ENCODE measurements at regions of chr2 and their contacts with region 1.

Region 1: DNA sequence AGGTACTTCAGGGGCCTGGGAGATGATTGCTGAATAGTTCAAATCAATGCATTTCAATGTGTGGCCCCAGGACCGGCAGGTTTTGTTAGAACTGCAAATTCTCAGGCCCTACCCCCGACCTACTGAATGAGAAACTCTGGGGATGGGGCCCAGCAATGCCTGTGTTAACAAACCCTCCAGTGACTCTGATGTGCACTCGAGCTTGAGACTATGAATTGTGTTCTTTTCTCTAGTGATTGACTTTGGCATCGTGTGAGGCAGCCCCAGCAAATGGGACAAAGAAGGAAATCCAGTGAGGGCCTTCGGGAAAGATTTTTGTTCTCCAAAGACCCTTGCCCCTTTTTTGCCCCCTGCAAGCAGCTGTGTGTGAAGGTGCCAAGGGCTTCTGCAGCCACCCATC is 22.4 kb downstream of the ALK start:
- DNase-seq: no peak
- H3K4me3 ChIP-seq: no peak overlapping the region
- H3K27ac ChIP-seq: no peak overlapping the region
- H3K4me1 ChIP-seq: no peaks in the 10 kb centered on the region
- H3K27me3 ChIP-seq: peaks cover 50% of the 10 kb centered on the region
- CTCF ChIP-seq: no peak

Region 2: DNA sequence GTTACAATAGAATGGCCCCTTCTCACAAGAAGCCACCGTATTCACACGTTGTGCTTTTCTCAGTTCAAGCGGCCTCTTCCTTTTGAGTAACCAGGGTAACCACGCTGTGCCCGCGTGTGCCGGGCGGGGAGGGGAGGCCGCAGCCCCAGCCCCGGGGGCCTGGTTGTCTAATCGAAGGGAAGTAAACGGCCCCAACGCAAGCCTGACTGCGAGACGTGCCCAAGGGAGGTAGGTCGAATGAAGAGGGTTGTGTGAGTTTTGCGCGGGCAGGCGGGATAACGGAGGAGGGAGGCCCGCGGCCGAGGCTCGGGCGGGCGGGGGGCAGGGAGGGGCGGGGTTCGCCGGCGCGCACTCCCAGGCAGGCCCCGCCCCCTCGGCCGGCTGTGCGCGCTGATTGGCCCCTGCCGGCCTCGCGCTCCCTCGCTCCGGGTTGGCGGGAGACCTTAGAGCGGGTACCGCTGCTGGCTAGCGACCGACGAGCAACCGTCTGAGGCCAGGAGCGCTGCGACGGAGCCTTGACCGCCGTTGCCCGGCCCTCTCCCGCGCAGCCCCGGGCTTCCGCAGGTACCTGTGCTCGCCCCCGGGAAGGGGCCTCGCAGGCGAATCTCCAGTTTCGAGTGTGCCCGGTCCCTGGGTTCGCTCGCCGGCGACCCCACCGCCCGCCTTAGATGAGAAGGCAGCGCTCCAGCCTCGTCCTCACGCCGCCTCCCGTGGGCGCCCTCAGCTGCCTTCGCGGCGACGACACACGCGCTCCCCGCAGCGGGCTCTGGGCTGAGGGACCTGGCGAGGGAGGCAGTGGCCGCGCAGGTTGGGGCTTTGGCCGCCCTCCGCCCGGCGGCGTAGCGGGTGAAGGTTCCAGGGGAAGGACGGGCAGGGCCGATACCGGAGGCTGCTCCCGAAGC is 1088.4 kb before region 1 on chr2 and contains the start of gene SPDYA:
- CTCF ChIA-PET with region 1: no interaction called
- POLR2A ChIA-PET with region 1: no interaction called
- intact Hi-C with region 1: no loop called
- DNase-seq: no peak
- H3K4me3 ChIP-seq: no peak within 1 kb of the TSS
- H3K27ac ChIP-seq: no peak within 1 kb of the TSS
- H3K4me1 ChIP-seq: no peaks in the 10 kb centered on the region
- H3K27me3 ChIP-seq: no peaks in the 10 kb centered on the region
- CTCF ChIP-seq: no peak
- total RNA-seq, gene SPDYA: 1.9 and 3.0 TPM in 2 replicates

Region 3: DNA sequence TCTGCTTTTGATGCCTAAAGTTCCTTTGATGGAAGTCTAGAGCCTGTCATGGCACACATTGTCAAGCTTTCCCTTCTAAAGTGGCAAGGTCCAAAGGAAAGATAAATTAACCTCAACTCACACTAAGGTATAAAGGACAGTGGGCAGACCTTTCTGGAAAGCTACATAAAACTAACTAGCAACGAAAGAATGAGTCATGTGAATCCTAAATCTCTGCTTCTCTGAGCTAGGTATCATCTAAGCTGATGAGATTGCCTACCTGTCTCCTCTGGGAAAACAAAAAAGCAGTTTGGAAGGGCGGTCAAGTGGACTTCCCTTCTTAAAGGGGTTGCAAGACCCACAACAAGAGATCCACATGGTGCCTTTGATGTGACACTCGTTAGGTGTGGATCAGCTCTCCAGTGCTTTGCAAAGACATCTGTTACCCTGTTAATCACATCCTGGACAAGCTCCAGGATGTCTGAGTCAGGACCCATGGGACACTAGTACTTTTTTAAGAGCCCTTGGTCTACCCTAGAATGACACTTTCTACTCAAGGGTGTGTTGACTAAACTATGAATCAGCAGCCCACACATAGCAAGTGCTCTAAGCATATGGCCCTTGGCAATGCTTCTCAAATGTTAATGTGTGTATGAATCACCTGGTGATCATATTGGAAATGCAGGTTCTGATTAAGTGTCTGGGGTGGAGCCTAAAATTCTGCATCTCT is 151.1 kb before region 1 on chr2:
- CTCF ChIA-PET with region 1: interaction called, 10 read pairs
- POLR2A ChIA-PET with region 1: no interaction called
- intact Hi-C with region 1: no loop called
- DNase-seq: peak in 1 of 2 experiments; percentile 79
- H3K4me3 ChIP-seq: no peak overlapping the region
- H3K27ac ChIP-seq: no peak overlapping the region
- H3K4me1 ChIP-seq: no peaks in the 10 kb centered on the region
- H3K27me3 ChIP-seq: peaks cover 13% of the 10 kb centered on the region
- CTCF ChIP-seq: no peak

Region 4: DNA sequence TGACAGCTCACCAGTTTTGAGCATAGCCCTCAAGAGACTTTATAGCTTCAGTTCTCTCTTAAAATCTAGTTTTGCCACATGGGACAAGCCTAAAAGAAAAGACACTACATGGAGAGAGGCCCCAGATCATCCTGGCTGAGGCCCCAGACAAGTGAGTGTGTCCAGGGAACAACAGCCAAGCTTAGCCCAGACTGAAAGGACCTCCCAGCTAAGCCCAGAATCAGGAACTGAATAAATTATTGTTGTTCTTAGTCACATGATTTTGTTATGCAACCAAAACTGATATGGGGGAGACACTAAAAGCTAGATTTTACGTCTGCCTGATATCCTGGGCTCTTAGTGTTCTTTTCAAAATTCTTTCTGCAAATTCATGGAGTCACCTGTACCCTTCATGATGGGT is 303.0 kb after region 1 on chr2:
- CTCF ChIA-PET with region 1: no interaction called
- POLR2A ChIA-PET with region 1: no interaction called
- intact Hi-C with region 1: no loop called
- DNase-seq: no peak
- H3K4me3 ChIP-seq: no peak overlapping the region
- H3K27ac ChIP-seq: no peak overlapping the region
- H3K4me1 ChIP-seq: no peaks in the 10 kb centered on the region
- H3K27me3 ChIP-seq: no peaks in the 10 kb centered on the region
- CTCF ChIP-seq: no peak